HEK293T (cell line): ENCODE measurements at regions of chr6 and their contacts with region 1.

Region 1: GRCh38 chr6:137313928-137314855 is 95.0 kb upstream of the IFNGR1 start:
- DNase-seq: peak; percentile 70

Region 2: GRCh38 chr6:137094411-137095008 is 219.7 kb before region 1 on chr6:
- CTCF ChIA-PET with region 1: interaction called, 12 read pairs
- POLR2A ChIA-PET with region 1: no interaction called
- DNase-seq: peak; percentile 64

Region 3: GRCh38 chr6:137157551-137157950 is 156.6 kb before region 1 on chr6:
- CTCF ChIA-PET with region 1: no interaction called
- POLR2A ChIA-PET with region 1: no interaction called
- DNase-seq: no peak